ENCODE measurements at regions of chr3 and their contacts with region 1.

Region 1: DNA sequence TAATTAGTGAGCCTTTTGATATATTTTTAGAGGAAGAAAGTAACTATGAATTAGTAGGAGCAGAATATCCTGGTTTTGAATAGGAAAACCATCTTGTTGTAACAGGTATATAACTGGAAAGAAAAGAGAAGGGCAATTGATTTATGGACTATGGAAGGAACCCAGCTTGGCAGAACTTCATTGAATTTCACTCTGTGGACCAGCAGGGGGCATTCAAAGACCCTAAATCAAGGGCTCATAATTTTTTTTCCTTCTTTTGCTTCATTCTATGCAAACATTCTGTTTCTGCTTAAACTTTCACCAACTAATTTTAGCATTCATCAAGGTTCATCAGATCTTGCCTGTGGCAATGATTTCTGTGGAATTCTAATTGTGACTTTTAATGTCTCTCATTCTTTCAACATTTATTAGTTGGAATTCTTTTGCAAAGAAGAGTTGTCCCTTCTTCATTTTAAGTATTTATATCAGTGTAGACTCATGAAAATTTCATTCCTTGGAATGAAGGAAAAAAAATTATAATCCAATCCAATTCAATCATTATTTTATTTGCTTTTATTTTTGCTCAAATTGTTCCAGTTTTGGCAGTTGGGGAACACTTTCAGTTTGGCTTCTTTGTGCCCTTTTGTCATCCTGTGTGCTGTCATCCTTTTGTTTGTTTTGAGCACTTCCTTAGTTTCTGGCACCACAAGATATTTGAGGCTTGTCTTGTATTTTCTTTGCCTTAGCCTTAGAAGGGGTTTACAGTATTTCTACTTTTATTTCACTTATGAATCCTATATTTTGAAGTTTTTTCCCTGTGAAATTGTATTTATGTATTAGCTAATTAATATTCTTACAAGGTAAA is 30.4 kb downstream of the NXPE3 start:
- DNase-seq: peak; percentile 53 to 63 (median 56)
- H3K4me3 ChIP-seq: no peak overlapping the region
- H3K4me3 Mint-ChIP-seq: no peak overlapping the region
- H3K27ac ChIP-seq: peak overlapping the region in 1 of 2 donors; percentile 68
- H3K27ac Mint-ChIP-seq: peak overlapping the region; percentile 61 to 87 (median 79)
- H3K4me1 ChIP-seq: peaks cover 8 to 21% of the 10 kb centered on the region in 2 donors
- H3K4me1 Mint-ChIP-seq: peaks cover 21% of the 10 kb centered on the region
- H3K27me3 ChIP-seq: no peaks in the 10 kb centered on the region
- H3K27me3 Mint-ChIP-seq: no peaks in the 10 kb centered on the region
- CTCF ChIP-seq: peak; percentile 89

Region 2: DNA sequence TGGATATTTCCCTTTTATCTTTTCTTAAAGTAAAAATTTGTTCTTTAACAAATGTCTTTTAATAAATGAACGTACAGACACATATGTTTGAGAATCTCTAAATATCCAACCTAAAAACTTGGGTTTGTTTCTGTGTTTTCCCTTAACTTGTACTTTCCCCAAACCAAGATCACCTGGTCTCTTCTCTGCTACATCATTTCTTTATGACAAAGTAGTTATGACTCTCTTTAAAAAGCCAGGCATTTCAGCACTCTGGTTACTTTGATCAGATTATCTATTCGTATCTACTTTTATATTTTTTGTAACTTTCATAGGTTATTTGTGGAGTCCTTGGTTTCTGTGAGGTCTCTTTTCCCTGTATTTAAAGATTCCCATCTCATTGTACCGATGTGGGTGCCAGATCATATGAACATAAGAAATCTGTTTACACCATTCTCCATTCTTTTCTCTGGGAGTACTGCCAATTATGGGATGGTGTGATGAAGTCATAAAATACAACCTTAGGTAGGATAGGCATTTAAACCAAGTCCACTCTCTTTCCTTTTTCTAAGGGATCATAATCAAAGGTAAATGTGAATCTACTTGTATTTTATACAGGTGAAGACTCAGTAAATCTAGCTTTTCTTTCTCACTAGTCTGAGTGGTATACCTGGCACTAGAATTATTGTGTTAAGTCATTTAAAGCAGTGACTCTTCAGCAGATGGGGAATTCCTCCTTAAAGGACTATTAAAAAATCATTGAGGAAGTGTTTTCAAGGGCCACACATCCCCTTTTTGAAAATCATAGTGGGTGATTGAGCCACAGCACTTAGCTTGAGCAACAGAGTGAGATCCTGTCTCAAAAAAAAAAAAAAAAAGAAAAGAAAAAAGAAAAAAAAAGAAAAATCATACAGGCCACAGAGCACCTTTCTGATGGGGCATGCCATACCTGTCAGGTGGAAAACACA is 27.5 kb after region 1 on chr3:
- intact Hi-C with region 1: no loop called
- DNase-seq: peak; percentile 85 to 95 (median 93)
- H3K4me3 ChIP-seq: peak overlapping the region in 1 of 3 experiments; percentile 29
- H3K4me3 Mint-ChIP-seq: peak overlapping the region in 1 of 2 donors; percentile 52
- H3K27ac ChIP-seq: peak overlapping the region in 1 of 2 donors; percentile 86
- H3K27ac Mint-ChIP-seq: peak overlapping the region; percentile 90 to 99 (median 96)
- H3K4me1 ChIP-seq: peaks cover 48 to 63% of the 10 kb centered on the region in 2 donors
- H3K4me1 Mint-ChIP-seq: peaks cover 72% of the 10 kb centered on the region
- H3K27me3 ChIP-seq: no peaks in the 10 kb centered on the region
- H3K27me3 Mint-ChIP-seq: peaks cover 0 to 6% (median 5%) of the 10 kb centered on the region in 3 donors
- CTCF ChIP-seq: no peak

Region 3: GRCh38 chr3:101849051-101849720 is 39.8 kb after region 1 on chr3 and contains the start of gene NFKBIZ:
- intact Hi-C with region 1: loop called (anchors 5 kb)
- DNase-seq: peak; percentile 92 to 97 (median 95)
- H3K4me3 ChIP-seq: peak within 1 kb of the TSS; percentile 61 to 100 (median 98)
- H3K4me3 Mint-ChIP-seq: peak within 1 kb of the TSS; percentile 96
- H3K27ac ChIP-seq: peak within 1 kb of the TSS; percentile 85 to 96
- H3K27ac Mint-ChIP-seq: peak within 1 kb of the TSS; percentile 94 to 99 (median 98)
- H3K4me1 ChIP-seq: peaks cover 41 to 56% of the 10 kb centered on the region in 2 donors
- H3K4me1 Mint-ChIP-seq: peaks cover 52% of the 10 kb centered on the region
- H3K27me3 ChIP-seq: no peaks in the 10 kb centered on the region
- H3K27me3 Mint-ChIP-seq: no peaks in the 10 kb centered on the region
- CTCF ChIP-seq: no peak
- polyA plus RNA-seq, gene NFKBIZ: 71.0 to 592 (median 84.9) TPM

Region 4: GRCh38 chr3:102024270-102024904 is 215.0 kb after region 1 on chr3:
- intact Hi-C with region 1: loop called (anchors 10 kb)
- DNase-seq: peak in 1 of 3 donors; percentile 27
- H3K4me3 ChIP-seq: no peak overlapping the region
- H3K4me3 Mint-ChIP-seq: no peak overlapping the region
- H3K27ac ChIP-seq: no peak overlapping the region
- H3K27ac Mint-ChIP-seq: no peak overlapping the region
- H3K4me1 ChIP-seq: peaks cover 41 to 61% of the 10 kb centered on the region in 2 donors
- H3K4me1 Mint-ChIP-seq: peaks cover 43% of the 10 kb centered on the region
- H3K27me3 ChIP-seq: no peaks in the 10 kb centered on the region
- H3K27me3 Mint-ChIP-seq: peaks cover 0 to 1% (median 0%) of the 10 kb centered on the region in 3 donors
- CTCF ChIP-seq: no peak

Region 5: GRCh38 chr3:102225407-102226132 is 416.2 kb after region 1 on chr3:
- intact Hi-C with region 1: loop called (anchors 2 kb)
- DNase-seq: peak; percentile 23 to 58 (median 51)
- H3K4me3 ChIP-seq: no peak overlapping the region
- H3K4me3 Mint-ChIP-seq: no peak overlapping the region
- H3K27ac ChIP-seq: no peak overlapping the region
- H3K27ac Mint-ChIP-seq: peak overlapping the region in 1 of 7 donors; percentile 45
- H3K4me1 ChIP-seq: peaks cover 30 to 35% of the 10 kb centered on the region in 2 donors
- H3K4me1 Mint-ChIP-seq: peaks cover 40% of the 10 kb centered on the region
- H3K27me3 ChIP-seq: no peaks in the 10 kb centered on the region
- H3K27me3 Mint-ChIP-seq: peaks cover 0 to 1% (median 0%) of the 10 kb centered on the region in 3 donors
- CTCF ChIP-seq: peak; percentile 74

Region 6: GRCh38 chr3:102529452-102529851 is 720.1 kb after region 1 on chr3:
- intact Hi-C with region 1: loop called in 1 of 2 experiments (anchors 5 kb)
- DNase-seq: no peak
- H3K4me3 ChIP-seq: no peak overlapping the region
- H3K4me3 Mint-ChIP-seq: no peak overlapping the region
- H3K27ac ChIP-seq: no peak overlapping the region
- H3K27ac Mint-ChIP-seq: peak overlapping the region in 1 of 7 donors; percentile 2
- H3K4me1 ChIP-seq: peaks cover 13 to 14% of the 10 kb centered on the region in 2 donors
- H3K4me1 Mint-ChIP-seq: peaks cover 23% of the 10 kb centered on the region
- H3K27me3 ChIP-seq: no peaks in the 10 kb centered on the region
- H3K27me3 Mint-ChIP-seq: no peaks in the 10 kb centered on the region
- CTCF ChIP-seq: no peak

Measured in CD14-positive monocyte (primary cell).